Left ventricle myocardium inferior (tissue), 1 donor: ENCODE measurements at regions of chr12 and their contacts with region 1.

Region 1: GRCh38 chr12:22334410-22335290 is at the start of gene ST8SIA1:
- DNase-seq: peak; percentile 49
- H3K4me3 ChIP-seq: peak within 1 kb of the TSS; percentile 76
- H3K27ac ChIP-seq: peak within 1 kb of the TSS; percentile 70
- H3K4me1 ChIP-seq: peaks cover 22% of the 10 kb centered on the region
- H3K27me3 ChIP-seq: peaks cover 39% of the 10 kb centered on the region
- CTCF ChIP-seq: no peak
- total RNA-seq, gene ST8SIA1: 2.1 TPM

Region 2: GRCh38 chr12:22287776-22288621 is 46.7 kb before region 1 on chr12:
- intact Hi-C with region 1: loop called (anchors 5 kb)
- DNase-seq: no peak
- H3K4me3 ChIP-seq: no peak overlapping the region
- H3K27ac ChIP-seq: no peak overlapping the region
- H3K4me1 ChIP-seq: peaks cover 4% of the 10 kb centered on the region
- H3K27me3 ChIP-seq: peaks cover 8% of the 10 kb centered on the region
- CTCF ChIP-seq: no peak